ENCODE measurements at regions of chr15 and their contacts with region 1.

Region 1: GRCh38 chr15:74787251-74788041 is 5.6 kb downstream of the CSK start:
- DNase-seq: peak; percentile 82
- ATAC-seq: peak; percentile 60
- H3K4me3 Mint-ChIP-seq: peak overlapping the region; percentile 89
- H3K27ac Mint-ChIP-seq: peak overlapping the region; percentile 99
- H3K4me1 Mint-ChIP-seq: peaks cover 90% of the 10 kb centered on the region
- H3K27me3 Mint-ChIP-seq: no peaks in the 10 kb centered on the region
- CTCF ChIP-seq: no peak

Region 2: GRCh38 chr15:74396445-74397238 is 390.8 kb before region 1 on chr15:
- CTCF ChIA-PET with region 1: no interaction called
- POLR2A ChIA-PET with region 1: interaction called, 21 read pairs
- intact Hi-C with region 1: loop called (anchors 2 kb)
- DNase-seq: peak; percentile 72
- ATAC-seq: peak; percentile 66
- H3K4me3 Mint-ChIP-seq: peak overlapping the region; percentile 80
- H3K27ac Mint-ChIP-seq: peak overlapping the region; percentile 99
- H3K4me1 Mint-ChIP-seq: peaks cover 100% of the 10 kb centered on the region
- H3K27me3 Mint-ChIP-seq: no peaks in the 10 kb centered on the region
- CTCF ChIP-seq: no peak

Region 3: GRCh38 chr15:74433592-74434262 is 353.7 kb before region 1 on chr15 and contains the start of gene SEMA7A:
- CTCF ChIA-PET with region 1: no interaction called
- POLR2A ChIA-PET with region 1: interaction called, 3 read pairs
- intact Hi-C with region 1: loop called (anchors 2 kb)
- DNase-seq: peak; percentile 83
- ATAC-seq: peak; percentile 80
- H3K4me3 Mint-ChIP-seq: peak within 1 kb of the TSS; percentile 96
- H3K27ac Mint-ChIP-seq: peak within 1 kb of the TSS; percentile 90
- H3K4me1 Mint-ChIP-seq: peaks cover 76% of the 10 kb centered on the region
- H3K27me3 Mint-ChIP-seq: no peaks in the 10 kb centered on the region
- CTCF ChIP-seq: no peak
- total RNA-seq, gene SEMA7A: 159 and 178 TPM in 2 replicates

Region 4: DNA sequence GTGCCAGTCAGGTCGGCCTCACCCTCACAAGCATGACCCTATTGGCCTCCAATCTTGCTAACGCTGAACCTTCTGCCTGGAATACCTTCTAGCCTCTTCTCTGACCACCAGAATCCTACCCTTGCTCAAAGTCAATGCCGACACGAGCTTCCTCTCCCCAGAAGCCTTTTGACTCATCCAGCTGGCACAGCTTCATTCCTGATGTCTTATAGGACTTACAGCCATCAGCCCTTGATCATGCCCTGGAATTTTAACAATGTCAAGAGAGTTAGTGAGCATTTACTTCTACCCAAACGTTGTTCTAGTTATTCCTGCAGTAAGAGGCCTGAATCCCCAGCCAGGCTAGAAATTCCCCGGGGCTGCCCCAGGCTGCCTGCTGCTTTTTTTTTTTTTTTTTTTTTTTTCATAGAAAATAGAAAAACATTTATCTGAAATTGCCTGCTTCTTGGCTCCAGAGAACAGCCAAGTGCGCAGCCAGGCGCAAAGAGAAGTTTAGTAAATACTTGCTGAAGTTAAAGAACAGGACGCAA is 34.9 kb before region 1 on chr15:
- CTCF ChIA-PET with region 1: no interaction called
- POLR2A ChIA-PET with region 1: no interaction called
- intact Hi-C with region 1: no loop called
- DNase-seq: no peak
- ATAC-seq: no peak
- H3K4me3 Mint-ChIP-seq: no peak overlapping the region
- H3K27ac Mint-ChIP-seq: no peak overlapping the region
- H3K4me1 Mint-ChIP-seq: no peaks in the 10 kb centered on the region
- H3K27me3 Mint-ChIP-seq: peaks cover 6% of the 10 kb centered on the region
- CTCF ChIP-seq: no peak

Region 5: GRCh38 chr15:74799856-74800547 is 12.6 kb after region 1 on chr15:
- CTCF ChIA-PET with region 1: interaction called, 1,146 read pairs
- POLR2A ChIA-PET with region 1: interaction called, 2,569 read pairs
- intact Hi-C with region 1: loop called (anchors 1 kb)
- DNase-seq: peak; percentile 88
- ATAC-seq: peak; percentile 89
- H3K4me3 Mint-ChIP-seq: peak overlapping the region; percentile 41
- H3K27ac Mint-ChIP-seq: peak overlapping the region; percentile 89
- H3K4me1 Mint-ChIP-seq: peaks cover 64% of the 10 kb centered on the region
- H3K27me3 Mint-ChIP-seq: no peaks in the 10 kb centered on the region
- CTCF ChIP-seq: peak; percentile 67

Region 6: DNA sequence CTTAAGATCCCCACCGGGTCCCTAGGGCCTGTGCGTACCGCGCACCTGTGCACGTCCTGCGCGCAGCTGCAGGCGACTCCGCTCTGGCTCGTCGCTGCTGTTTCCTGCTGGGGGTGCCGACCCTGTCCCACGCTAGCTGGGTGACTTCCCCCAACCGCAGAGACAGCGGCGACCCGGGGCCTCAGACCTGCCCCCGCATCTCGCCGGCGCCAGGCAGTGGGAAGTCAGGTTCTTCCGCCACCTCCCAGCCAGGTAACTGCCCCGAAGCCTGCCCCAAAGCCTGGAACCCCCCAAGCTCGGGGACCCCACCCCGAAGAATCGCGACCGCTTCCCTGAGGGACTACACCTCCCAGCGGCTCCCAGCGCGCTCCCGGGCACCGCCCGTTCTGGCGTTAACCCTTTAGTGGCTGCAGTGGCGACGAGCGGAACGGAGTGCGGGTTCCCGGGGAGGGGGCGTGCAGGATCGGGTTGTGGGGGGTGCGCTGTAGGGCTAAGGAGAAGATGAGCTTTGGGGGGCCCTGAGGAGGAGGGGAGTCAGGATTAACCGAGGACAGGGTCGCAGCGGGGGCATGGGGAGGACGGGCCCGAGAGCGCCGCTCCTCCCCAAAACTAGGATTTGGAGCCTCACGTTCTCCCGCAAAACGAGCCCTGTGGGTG is 559.9 kb after region 1 on chr15:
- CTCF ChIA-PET with region 1: no interaction called
- POLR2A ChIA-PET with region 1: no interaction called
- intact Hi-C with region 1: loop called (anchors 5 kb)
- DNase-seq: peak; percentile 69
- ATAC-seq: peak; percentile 77
- H3K4me3 Mint-ChIP-seq: peak overlapping the region; percentile 86
- H3K27ac Mint-ChIP-seq: peak overlapping the region; percentile 85
- H3K4me1 Mint-ChIP-seq: peaks cover 46% of the 10 kb centered on the region
- H3K27me3 Mint-ChIP-seq: peaks cover 1% of the 10 kb centered on the region
- CTCF ChIP-seq: no peak